Mammary epithelial cell (primary cell): ENCODE measurements at regions of chr7 and their contacts with region 1.

Region 1: GRCh38 chr7:80499350-80499953 is 12.4 kb downstream of the GNAT3 start:
- DNase-seq: peak; percentile 95
- H3K4me3 ChIP-seq: peak overlapping the region in 2 of 3 experiments; percentile 19 to 32
- H3K27ac ChIP-seq: peak overlapping the region; percentile 100
- H3K4me1 ChIP-seq: peaks cover 11% of the 10 kb centered on the region
- H3K27me3 ChIP-seq: no peaks in the 10 kb centered on the region
- CTCF ChIP-seq: no peak

Region 2: DNA sequence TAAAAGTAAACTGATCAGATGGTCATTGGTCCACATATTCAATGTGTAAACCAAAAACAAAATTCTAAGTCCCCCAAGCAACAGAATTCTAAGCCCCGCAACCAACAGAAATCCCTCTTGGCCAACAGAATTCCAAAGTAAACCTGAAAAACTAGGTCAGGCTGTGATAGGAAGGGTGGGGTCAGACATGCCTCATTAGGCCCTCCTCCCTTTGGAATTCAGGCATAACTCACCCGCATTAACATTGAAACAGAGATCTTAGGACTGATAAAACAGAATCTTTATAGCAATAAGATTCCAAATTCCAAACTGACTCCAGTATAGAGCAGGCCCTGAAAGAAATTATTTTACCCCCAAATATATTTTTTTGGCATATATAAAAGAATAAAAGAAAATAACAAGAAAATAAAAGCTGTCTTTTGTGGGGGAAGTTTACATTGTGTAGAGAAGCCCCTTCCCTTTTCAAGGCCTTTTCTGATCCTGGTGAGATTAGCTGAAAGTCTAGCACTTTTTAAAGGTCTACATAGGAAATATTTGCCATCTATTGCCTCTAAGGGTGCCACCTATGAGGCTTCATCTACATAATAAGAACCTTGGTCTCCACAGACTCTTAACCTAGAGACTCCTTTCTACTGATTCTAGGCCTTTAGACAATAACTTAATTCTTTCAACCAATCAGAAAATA is 18.1 kb before region 1 on chr7:
- CTCF ChIA-PET with region 1: no interaction called
- dilution Hi-C with region 1: no loop called
- in situ Hi-C with region 1: no loop called
- intact Hi-C with region 1: loop called (anchors 1 kb)
- DNase-seq: peak; percentile 59
- H3K4me3 ChIP-seq: no peak overlapping the region
- H3K27ac ChIP-seq: peak overlapping the region; percentile 64
- H3K4me1 ChIP-seq: peaks cover 32% of the 10 kb centered on the region
- H3K27me3 ChIP-seq: no peaks in the 10 kb centered on the region
- CTCF ChIP-seq: no peak

Region 3: DNA sequence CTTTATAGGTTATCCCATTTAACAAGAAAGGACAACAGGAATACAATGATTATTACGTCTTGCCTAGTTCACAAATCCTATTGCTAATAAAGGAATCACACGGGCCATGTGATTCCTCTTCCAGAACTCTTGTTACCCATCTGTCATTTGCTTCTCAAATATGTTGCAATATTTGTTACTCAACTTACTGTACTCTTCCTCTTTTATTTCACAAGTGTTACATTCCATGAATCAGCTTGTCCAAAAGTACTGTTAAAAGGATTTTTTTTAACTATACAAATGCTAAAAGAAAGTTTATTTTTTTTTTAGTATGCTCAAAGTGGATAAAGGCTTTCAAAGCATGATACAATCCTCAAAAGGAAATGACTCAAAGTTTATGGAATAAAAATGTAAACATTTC is 135.1 kb after region 1 on chr7:
- CTCF ChIA-PET with region 1: no interaction called
- dilution Hi-C with region 1: no loop called
- in situ Hi-C with region 1: no loop called
- intact Hi-C with region 1: loop called (anchors 1 kb)
- DNase-seq: peak; percentile 80
- H3K4me3 ChIP-seq: no peak overlapping the region
- H3K27ac ChIP-seq: no peak overlapping the region
- H3K4me1 ChIP-seq: no peaks in the 10 kb centered on the region
- H3K27me3 ChIP-seq: no peaks in the 10 kb centered on the region
- CTCF ChIP-seq: no peak

Region 4: GRCh38 chr7:80722616-80723141 is 223.2 kb after region 1 on chr7:
- CTCF ChIA-PET with region 1: no interaction called
- dilution Hi-C with region 1: no loop called
- in situ Hi-C with region 1: no loop called
- intact Hi-C with region 1: loop called (anchors 5 kb)
- DNase-seq: peak; percentile 99
- H3K4me3 ChIP-seq: no peak overlapping the region
- H3K27ac ChIP-seq: peak overlapping the region; percentile 81
- H3K4me1 ChIP-seq: peaks cover 29% of the 10 kb centered on the region
- H3K27me3 ChIP-seq: no peaks in the 10 kb centered on the region
- CTCF ChIP-seq: no peak